CD8-positive, alpha-beta T cell (primary cell): ENCODE measurements at regions of chr13 and their contacts with region 1.

Region 1: DNA sequence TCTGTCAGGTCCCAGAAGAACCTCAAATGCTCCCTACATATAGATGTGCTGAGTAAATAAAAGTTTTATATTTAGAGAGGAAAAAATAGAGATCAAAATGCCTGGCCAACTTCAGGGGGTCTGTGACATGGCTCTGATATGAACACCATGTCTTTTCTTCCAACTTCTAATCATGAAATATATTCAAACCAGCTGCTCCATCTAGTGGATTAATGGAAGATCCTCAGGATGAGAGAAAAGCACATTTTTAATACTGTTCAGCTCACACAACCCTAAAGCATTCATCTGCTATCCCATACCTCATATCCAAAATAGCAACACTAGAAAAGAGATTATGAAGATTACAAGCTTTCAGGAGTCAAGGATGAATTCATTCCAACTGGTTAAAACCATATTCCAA is 56.0 kb upstream of the DOCK9 start:
- DNase-seq: peak in 1 of 9 experiments; percentile 50
- ATAC-seq: peak; percentile 62
- H3K4me3 ChIP-seq: no peak overlapping the region
- H3K4me3 Mint-ChIP-seq: no peak overlapping the region
- H3K27ac ChIP-seq: no peak overlapping the region
- H3K27ac Mint-ChIP-seq: no peak overlapping the region
- H3K4me1 ChIP-seq: peaks cover 6% of the 10 kb centered on the region
- H3K4me1 Mint-ChIP-seq: peaks cover 46% of the 10 kb centered on the region
- H3K27me3 ChIP-seq: no peaks in the 10 kb centered on the region
- H3K27me3 Mint-ChIP-seq: no peaks in the 10 kb centered on the region
- CTCF ChIP-seq: peak; percentile 64

Region 2: GRCh38 chr13:98782654-98783053 is 251.2 kb before region 1 on chr13:
- CTCF ChIA-PET with region 1: no interaction called
- POLR2A ChIA-PET with region 1: no interaction called
- intact Hi-C with region 1: no loop called
- DNase-seq: no peak
- ATAC-seq: no peak
- H3K4me3 ChIP-seq: no peak overlapping the region
- H3K4me3 Mint-ChIP-seq: no peak overlapping the region
- H3K27ac ChIP-seq: no peak overlapping the region
- H3K27ac Mint-ChIP-seq: no peak overlapping the region
- H3K4me1 ChIP-seq: no peaks in the 10 kb centered on the region
- H3K4me1 Mint-ChIP-seq: no peaks in the 10 kb centered on the region
- H3K27me3 ChIP-seq: peaks cover 0 to 2% of the 10 kb centered on the region in 2 experiments
- H3K27me3 Mint-ChIP-seq: peaks cover 13% of the 10 kb centered on the region
- CTCF ChIP-seq: no peak

Region 3: DNA sequence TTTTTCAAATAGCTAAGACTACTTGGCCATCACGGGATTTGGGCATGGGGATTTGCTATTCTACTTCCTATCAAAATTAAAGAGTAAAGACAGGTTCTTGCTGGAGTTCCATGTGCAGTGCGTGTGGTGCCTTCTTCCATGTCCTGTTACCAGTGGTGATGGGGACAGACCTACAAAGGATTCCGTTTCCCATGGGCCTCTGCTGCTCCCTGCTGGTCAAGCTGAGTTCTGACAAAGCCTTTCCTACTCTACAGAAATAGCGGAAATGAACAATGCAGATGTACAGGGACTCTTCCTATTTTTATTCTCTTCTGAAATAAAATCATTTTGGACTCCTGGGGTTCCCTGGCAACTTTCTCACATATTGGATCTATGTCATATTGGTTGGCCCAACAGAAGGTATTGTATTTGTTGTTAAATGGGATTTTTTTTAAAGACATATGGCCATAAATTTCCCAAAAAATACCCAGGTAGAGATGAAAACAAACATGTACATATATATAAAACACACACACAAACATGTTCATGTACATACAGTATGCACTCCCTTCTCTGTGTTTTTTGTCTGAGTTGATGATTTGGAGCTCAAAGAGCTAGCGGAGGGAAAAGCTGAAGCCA is 190.8 kb before region 1 on chr13:
- CTCF ChIA-PET with region 1: interaction called, 3 read pairs
- POLR2A ChIA-PET with region 1: interaction called, 5 read pairs
- intact Hi-C with region 1: loop called (anchors 1 to 2 kb)
- DNase-seq: peak; percentile 19 to 68 (median 57)
- ATAC-seq: peak; percentile 82
- H3K4me3 ChIP-seq: no peak overlapping the region
- H3K4me3 Mint-ChIP-seq: no peak overlapping the region
- H3K27ac ChIP-seq: no peak overlapping the region
- H3K27ac Mint-ChIP-seq: no peak overlapping the region
- H3K4me1 ChIP-seq: no peaks in the 10 kb centered on the region
- H3K4me1 Mint-ChIP-seq: peaks cover 2% of the 10 kb centered on the region
- H3K27me3 ChIP-seq: no peaks in the 10 kb centered on the region
- H3K27me3 Mint-ChIP-seq: no peaks in the 10 kb centered on the region
- CTCF ChIP-seq: peak; percentile 80

Region 4: GRCh38 chr13:98853771-98854221 is 180.0 kb before region 1 on chr13:
- CTCF ChIA-PET with region 1: no interaction called
- POLR2A ChIA-PET with region 1: no interaction called
- intact Hi-C with region 1: no loop called
- DNase-seq: no peak
- ATAC-seq: no peak
- H3K4me3 ChIP-seq: no peak overlapping the region
- H3K4me3 Mint-ChIP-seq: no peak overlapping the region
- H3K27ac ChIP-seq: no peak overlapping the region
- H3K27ac Mint-ChIP-seq: no peak overlapping the region
- H3K4me1 ChIP-seq: no peaks in the 10 kb centered on the region
- H3K4me1 Mint-ChIP-seq: no peaks in the 10 kb centered on the region
- H3K27me3 ChIP-seq: no peaks in the 10 kb centered on the region
- H3K27me3 Mint-ChIP-seq: no peaks in the 10 kb centered on the region
- CTCF ChIP-seq: no peak

Region 5: GRCh38 chr13:98900442-98900841 is 133.4 kb before region 1 on chr13:
- CTCF ChIA-PET with region 1: interaction called, 3 read pairs
- POLR2A ChIA-PET with region 1: no interaction called
- intact Hi-C with region 1: loop called in 1 of 2 experiments (anchors 5 kb)
- DNase-seq: no peak
- ATAC-seq: no peak
- H3K4me3 ChIP-seq: no peak overlapping the region
- H3K4me3 Mint-ChIP-seq: no peak overlapping the region
- H3K27ac ChIP-seq: no peak overlapping the region
- H3K27ac Mint-ChIP-seq: no peak overlapping the region
- H3K4me1 ChIP-seq: no peaks in the 10 kb centered on the region
- H3K4me1 Mint-ChIP-seq: peaks cover 2% of the 10 kb centered on the region
- H3K27me3 ChIP-seq: no peaks in the 10 kb centered on the region
- H3K27me3 Mint-ChIP-seq: no peaks in the 10 kb centered on the region
- CTCF ChIP-seq: no peak

Region 6: DNA sequence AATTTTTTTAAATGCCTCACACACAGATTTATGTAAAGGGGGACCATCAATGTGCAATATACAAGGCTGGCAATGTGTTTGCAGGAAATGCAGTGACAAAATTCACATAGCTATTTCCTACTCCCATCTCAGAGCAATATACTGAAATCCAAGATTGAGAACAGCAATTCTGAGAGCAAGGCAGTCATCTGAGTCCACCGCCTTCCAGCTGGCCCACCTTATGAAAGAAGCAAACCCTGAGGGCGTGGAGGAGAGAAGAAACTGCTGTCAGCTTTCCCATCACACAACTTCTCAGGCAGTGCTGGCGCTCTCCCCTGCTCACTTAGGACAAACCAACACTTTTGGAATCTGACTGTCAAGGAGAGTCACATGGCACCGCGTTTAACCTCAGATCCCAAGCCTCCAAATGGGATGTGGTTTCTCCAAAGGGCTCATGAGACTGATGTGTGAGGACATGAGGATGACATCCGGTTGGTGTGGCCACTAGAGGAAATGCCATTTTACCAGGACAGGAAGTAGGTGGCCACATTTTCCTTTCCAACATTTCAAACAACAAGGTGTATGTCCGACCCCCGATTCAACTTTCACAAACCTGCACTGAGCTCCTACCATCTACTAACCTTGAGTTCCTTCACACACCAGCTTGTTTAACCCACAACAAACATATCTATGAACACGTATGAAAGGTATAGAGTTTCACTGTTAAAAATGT is 52.3 kb before region 1 on chr13:
- CTCF ChIA-PET with region 1: interaction called, 5 read pairs
- POLR2A ChIA-PET with region 1: interaction called, 3 read pairs
- intact Hi-C with region 1: loop called (anchors 5 kb)
- DNase-seq: peak in 1 of 9 experiments; percentile 36
- ATAC-seq: peak; percentile 73
- H3K4me3 ChIP-seq: no peak overlapping the region
- H3K4me3 Mint-ChIP-seq: peak overlapping the region; percentile 6
- H3K27ac ChIP-seq: no peak overlapping the region
- H3K27ac Mint-ChIP-seq: peak overlapping the region; percentile 19
- H3K4me1 ChIP-seq: peaks cover 44% of the 10 kb centered on the region
- H3K4me1 Mint-ChIP-seq: peaks cover 88% of the 10 kb centered on the region
- H3K27me3 ChIP-seq: no peaks in the 10 kb centered on the region
- H3K27me3 Mint-ChIP-seq: no peaks in the 10 kb centered on the region
- CTCF ChIP-seq: no peak

Region 7: DNA sequence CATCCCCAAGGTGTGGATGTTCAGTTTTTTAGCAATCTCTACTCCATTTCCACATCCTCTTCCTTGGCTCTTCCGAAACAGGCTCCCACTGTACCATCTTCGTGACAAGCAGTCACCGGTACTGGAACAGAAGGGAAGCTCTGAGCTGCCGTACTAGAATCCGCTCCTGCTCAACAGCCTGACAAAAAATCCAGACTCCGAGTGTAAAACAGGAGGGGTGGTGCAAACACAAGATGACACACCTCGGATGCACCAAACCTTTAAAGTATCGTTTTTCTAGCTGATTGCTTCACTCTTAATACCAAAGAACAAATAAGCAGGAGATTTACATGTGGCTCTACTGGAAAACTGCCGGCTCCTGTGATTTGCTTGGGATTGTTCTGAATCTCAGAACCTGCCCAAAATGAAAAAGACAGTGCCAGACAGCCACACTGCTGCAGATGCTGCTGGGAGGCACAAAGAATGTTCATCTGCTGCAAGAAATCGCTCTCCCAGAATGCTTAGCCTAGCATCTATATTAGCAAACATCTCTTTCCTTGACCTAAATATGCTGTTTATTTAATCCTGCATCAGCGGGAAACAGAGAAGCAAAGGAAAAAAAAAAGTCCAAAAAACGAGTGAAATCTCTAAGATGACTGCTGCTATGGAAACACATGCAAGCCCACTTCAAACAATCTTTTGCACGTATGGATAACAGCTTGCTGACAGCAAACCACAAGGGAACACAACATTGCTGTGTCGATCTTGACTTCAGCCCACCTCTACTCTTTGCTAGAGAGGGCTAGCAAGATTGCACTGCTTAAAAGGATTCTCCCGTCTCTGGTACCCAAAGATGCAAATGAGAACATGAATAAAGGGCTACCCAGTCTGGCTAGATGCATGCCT is 18.0 kb before region 1 on chr13:
- CTCF ChIA-PET with region 1: interaction called, 9 read pairs
- POLR2A ChIA-PET with region 1: no interaction called
- intact Hi-C with region 1: loop called in 1 of 2 experiments (anchors 2 kb)
- DNase-seq: peak in 4 of 9 experiments; percentile 17 to 76 (median 42)
- ATAC-seq: peak; percentile 89
- H3K4me3 ChIP-seq: no peak overlapping the region
- H3K4me3 Mint-ChIP-seq: peak overlapping the region; percentile 53
- H3K27ac ChIP-seq: no peak overlapping the region
- H3K27ac Mint-ChIP-seq: peak overlapping the region; percentile 74
- H3K4me1 ChIP-seq: peaks cover 37% of the 10 kb centered on the region
- H3K4me1 Mint-ChIP-seq: peaks cover 76% of the 10 kb centered on the region
- H3K27me3 ChIP-seq: no peaks in the 10 kb centered on the region
- H3K27me3 Mint-ChIP-seq: no peaks in the 10 kb centered on the region
- CTCF ChIP-seq: no peak

Region 8: DNA sequence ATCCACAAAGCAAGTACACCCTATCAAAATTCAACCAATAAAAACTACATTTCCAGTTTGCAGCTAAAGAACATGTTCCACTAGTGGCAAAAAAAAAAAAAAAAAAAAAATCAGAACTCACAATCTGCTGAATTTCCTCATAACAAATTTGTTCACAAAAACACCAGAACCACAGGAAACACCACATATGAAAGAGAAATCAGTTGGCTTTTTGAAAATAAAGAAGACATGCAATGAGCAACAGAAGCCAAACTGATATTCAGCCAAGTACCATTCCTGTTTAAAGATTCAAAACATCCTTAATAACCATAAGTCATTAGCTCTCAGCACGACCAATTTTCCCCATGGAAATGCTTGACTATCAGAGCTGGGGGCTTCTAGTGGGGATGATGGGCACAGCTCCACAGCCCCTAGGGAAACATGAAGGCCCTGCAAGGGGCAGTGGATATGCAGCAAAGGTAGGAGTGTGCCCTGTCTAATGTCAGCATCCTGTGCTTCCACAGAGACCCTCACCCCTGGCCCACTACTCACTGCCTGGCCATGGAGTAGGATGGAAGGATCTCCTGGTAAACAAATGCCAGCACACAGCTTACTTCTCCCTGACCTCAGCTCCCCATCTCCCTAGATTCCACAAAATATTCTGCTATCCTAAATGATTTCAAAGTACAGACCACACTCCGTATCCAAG is 18.1 kb after region 1 on chr13:
- CTCF ChIA-PET with region 1: interaction called, 11 read pairs
- POLR2A ChIA-PET with region 1: interaction called, 6 read pairs
- intact Hi-C with region 1: loop called in 1 of 2 experiments (anchors 2 kb)
- DNase-seq: peak in 2 of 9 experiments; percentile 48 to 76
- ATAC-seq: peak; percentile 48
- H3K4me3 ChIP-seq: peak overlapping the region in 1 of 2 experiments; percentile 18
- H3K4me3 Mint-ChIP-seq: peak overlapping the region; percentile 74
- H3K27ac ChIP-seq: peak overlapping the region; percentile 16 to 33
- H3K27ac Mint-ChIP-seq: peak overlapping the region; percentile 94
- H3K4me1 ChIP-seq: peaks cover 94% of the 10 kb centered on the region
- H3K4me1 Mint-ChIP-seq: peaks cover 86% of the 10 kb centered on the region
- H3K27me3 ChIP-seq: no peaks in the 10 kb centered on the region
- H3K27me3 Mint-ChIP-seq: no peaks in the 10 kb centered on the region
- CTCF ChIP-seq: no peak